Activated CD4-positive, alpha-beta T cell treated with anti-CD3 and anti-CD28 coated beads for 36 hours (primary cell): ENCODE measurements at regions of chr1 and their contacts with region 1.

Region 1: GRCh38 chr1:155277070-155277895 is at the start of gene HCN3:
- DNase-seq: peak; percentile 97
- ATAC-seq: peak; percentile 68
- H3K4me3 Mint-ChIP-seq: peak within 1 kb of the TSS; percentile 63
- H3K27ac Mint-ChIP-seq: no peak within 1 kb of the TSS
- H3K4me1 Mint-ChIP-seq: peaks cover 31% of the 10 kb centered on the region
- H3K27me3 Mint-ChIP-seq: no peaks in the 10 kb centered on the region
- total RNA-seq, gene HCN3: 1.9 to 2.3 TPM

Region 2: DNA sequence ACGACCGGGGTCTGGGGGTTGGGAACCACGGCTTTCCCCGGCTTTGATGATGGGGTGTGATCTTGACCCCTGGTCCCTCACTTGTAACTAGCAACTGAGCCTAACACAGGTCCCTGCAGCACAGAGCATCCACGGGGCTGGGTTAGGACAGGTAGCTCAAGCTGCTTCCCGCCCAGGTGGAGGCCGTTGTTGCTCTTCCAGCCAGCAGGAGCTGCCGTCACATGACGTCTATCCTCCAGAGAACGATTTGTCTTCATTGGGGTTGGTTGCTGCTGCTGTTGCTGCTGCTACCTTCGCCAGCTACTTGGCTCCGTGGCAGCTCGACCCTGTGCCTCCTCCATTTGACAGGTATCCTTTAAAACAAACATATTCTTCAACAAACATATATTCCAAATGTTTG is 595.0 kb before region 1 on chr1:
- CTCF ChIA-PET with region 1: no interaction called
- POLR2A ChIA-PET with region 1: no interaction called
- intact Hi-C with region 1: no loop called
- DNase-seq: no peak
- ATAC-seq: no peak
- H3K4me3 Mint-ChIP-seq: no peak overlapping the region
- H3K27ac Mint-ChIP-seq: no peak overlapping the region
- H3K4me1 Mint-ChIP-seq: no peaks in the 10 kb centered on the region
- H3K27me3 Mint-ChIP-seq: no peaks in the 10 kb centered on the region

Region 3: GRCh38 chr1:155193275-155193990 is 83.8 kb before region 1 on chr1:
- CTCF ChIA-PET with region 1: interaction called, 5 read pairs
- POLR2A ChIA-PET with region 1: no interaction called
- intact Hi-C with region 1: loop called in 1 of 2 experiments (anchors 1 kb)
- DNase-seq: peak; percentile 89
- ATAC-seq: peak; percentile 62
- H3K4me3 Mint-ChIP-seq: peak overlapping the region; percentile 94
- H3K27ac Mint-ChIP-seq: peak overlapping the region; percentile 96
- H3K4me1 Mint-ChIP-seq: peaks cover 31% of the 10 kb centered on the region
- H3K27me3 Mint-ChIP-seq: no peaks in the 10 kb centered on the region

Region 4: GRCh38 chr1:155227261-155228095 is 49.8 kb before region 1 on chr1:
- CTCF ChIA-PET with region 1: no interaction called
- POLR2A ChIA-PET with region 1: no interaction called
- intact Hi-C with region 1: loop called in 1 of 2 experiments (anchors 1 kb)
- DNase-seq: peak; percentile 99
- ATAC-seq: peak; percentile 98
- H3K4me3 Mint-ChIP-seq: peak overlapping the region; percentile 96
- H3K27ac Mint-ChIP-seq: peak overlapping the region; percentile 97
- H3K4me1 Mint-ChIP-seq: peaks cover 27% of the 10 kb centered on the region
- H3K27me3 Mint-ChIP-seq: no peaks in the 10 kb centered on the region

Region 5: GRCh38 chr1:155250633-155251449 is 26.4 kb before region 1 on chr1:
- CTCF ChIA-PET with region 1: interaction called, 34 read pairs
- POLR2A ChIA-PET with region 1: interaction called, 6 read pairs
- intact Hi-C with region 1: loop called in 1 of 2 experiments (anchors 1 kb)
- DNase-seq: peak; percentile 99
- ATAC-seq: peak; percentile 96
- H3K4me3 Mint-ChIP-seq: peak overlapping the region; percentile 38
- H3K27ac Mint-ChIP-seq: peak overlapping the region; percentile 31
- H3K4me1 Mint-ChIP-seq: peaks cover 25% of the 10 kb centered on the region
- H3K27me3 Mint-ChIP-seq: no peaks in the 10 kb centered on the region

Region 6: GRCh38 chr1:155562581-155563376 is 285.5 kb after region 1 on chr1 and contains the start of gene ASH1L:
- CTCF ChIA-PET with region 1: no interaction called
- POLR2A ChIA-PET with region 1: interaction called, 3 read pairs
- intact Hi-C with region 1: loop called in 1 of 2 experiments (anchors 1 kb)
- DNase-seq: peak; percentile 96
- ATAC-seq: peak; percentile 83
- H3K4me3 Mint-ChIP-seq: peak within 1 kb of the TSS; percentile 90
- H3K27ac Mint-ChIP-seq: peak within 1 kb of the TSS; percentile 99
- H3K4me1 Mint-ChIP-seq: peaks cover 46% of the 10 kb centered on the region
- H3K27me3 Mint-ChIP-seq: no peaks in the 10 kb centered on the region
- total RNA-seq, gene ASH1L: 28.1 to 31.4 TPM

Region 7: DNA sequence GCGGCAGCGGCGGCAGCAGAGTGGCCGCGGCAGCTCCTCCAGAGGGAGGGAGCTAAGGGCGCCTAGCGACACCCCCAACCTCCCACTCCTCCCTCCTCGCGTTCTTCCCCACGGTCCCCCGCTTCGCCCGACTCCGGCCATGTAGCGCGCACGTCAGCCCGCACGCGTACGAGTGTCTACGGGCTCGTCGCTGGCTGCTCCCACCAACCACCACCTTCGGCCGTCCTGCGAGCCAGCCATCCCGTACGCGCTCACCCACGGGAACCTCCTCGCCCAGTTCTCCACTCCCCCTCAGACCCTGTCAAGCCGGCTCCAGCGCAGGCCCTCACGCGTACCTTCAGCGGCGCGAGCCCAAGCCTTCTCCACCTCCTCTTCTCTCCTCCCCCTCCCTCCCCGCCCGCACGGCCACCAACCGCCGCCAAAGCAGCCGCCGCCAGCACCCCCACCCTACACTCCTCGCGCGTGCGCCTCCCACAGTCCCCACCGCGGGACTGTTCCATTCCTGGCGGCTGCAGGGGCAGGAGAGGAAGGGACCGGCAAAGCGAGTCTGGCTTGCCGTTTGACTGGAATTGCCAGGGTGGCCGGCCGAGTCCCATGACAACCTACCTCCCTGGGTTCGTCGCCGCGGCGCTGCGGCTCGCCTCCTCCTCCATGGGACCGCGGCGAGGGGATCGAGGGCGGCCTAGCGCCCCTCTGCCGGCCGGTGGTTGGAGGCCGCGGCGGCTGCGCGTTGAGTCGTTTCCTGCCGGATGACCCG is 411.2 kb after region 1 on chr1 and contains the start of gene YY1AP1:
- CTCF ChIA-PET with region 1: no interaction called
- POLR2A ChIA-PET with region 1: no interaction called
- intact Hi-C with region 1: loop called in 1 of 2 experiments (anchors 5 kb)
- DNase-seq: peak; percentile 95
- ATAC-seq: peak; percentile 86
- H3K4me3 Mint-ChIP-seq: peak within 1 kb of the TSS; percentile 97
- H3K27ac Mint-ChIP-seq: peak within 1 kb of the TSS; percentile 94
- H3K4me1 Mint-ChIP-seq: peaks cover 29% of the 10 kb centered on the region
- H3K27me3 Mint-ChIP-seq: no peaks in the 10 kb centered on the region
- total RNA-seq, gene YY1AP1: 59.6 to 76.0 TPM